Mammary epithelial cell (primary cell): ENCODE measurements at regions of chr18 and their contacts with region 1.

Region 1: GRCh38 chr18:63016270-63016669 is 300.9 kb downstream of the PHLPP1 start:
- DNase-seq: peak; percentile 19
- H3K4me3 ChIP-seq: no peak overlapping the region
- H3K27ac ChIP-seq: no peak overlapping the region
- H3K4me1 ChIP-seq: no peaks in the 10 kb centered on the region
- H3K27me3 ChIP-seq: peaks cover 2% of the 10 kb centered on the region
- CTCF ChIP-seq: peak; percentile 78 to 80

Region 2: DNA sequence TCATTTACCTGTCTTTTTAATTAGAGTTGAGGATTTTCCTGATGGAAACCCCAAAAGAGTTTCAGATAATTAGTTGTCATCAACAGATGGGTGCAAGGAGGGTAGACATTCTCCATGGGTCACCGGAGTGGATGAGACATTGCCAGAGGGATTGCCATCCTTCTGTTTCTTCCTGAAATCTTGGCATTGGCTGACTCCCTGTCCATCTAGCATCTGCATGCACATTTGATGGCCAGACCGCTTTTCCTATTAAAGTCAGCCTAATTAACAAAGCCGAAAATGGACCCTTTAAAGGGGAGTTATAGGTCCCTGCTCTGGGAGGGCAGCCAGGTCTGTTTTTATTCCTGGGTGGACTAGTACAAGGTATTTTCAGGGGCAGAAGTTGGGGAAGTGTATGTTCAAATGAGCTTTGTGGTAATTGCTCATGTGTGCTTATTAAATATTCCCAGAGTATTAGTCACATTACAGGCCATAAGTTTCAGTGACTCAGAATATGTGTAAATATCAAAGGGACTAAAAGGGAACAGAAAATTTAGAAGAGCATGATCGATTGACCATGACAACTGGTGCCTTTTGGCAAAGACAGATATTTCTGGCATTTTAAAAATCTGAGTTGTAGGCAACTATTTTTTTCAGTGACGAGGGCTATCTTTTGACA is 91.1 kb before region 1 on chr18:
- CTCF ChIA-PET with region 1: no interaction called
- dilution Hi-C with region 1: no loop called
- in situ Hi-C with region 1: no loop called
- intact Hi-C with region 1: no loop called
- DNase-seq: peak; percentile 53
- H3K4me3 ChIP-seq: no peak overlapping the region
- H3K27ac ChIP-seq: no peak overlapping the region
- H3K4me1 ChIP-seq: peaks cover 6% of the 10 kb centered on the region
- H3K27me3 ChIP-seq: no peaks in the 10 kb centered on the region
- CTCF ChIP-seq: no peak

Region 3: GRCh38 chr18:63119647-63120046 is 103.4 kb after region 1 on chr18:
- CTCF ChIA-PET with region 1: no interaction called
- dilution Hi-C with region 1: no loop called
- in situ Hi-C with region 1: no loop called
- intact Hi-C with region 1: loop called (anchors 1 kb)
- DNase-seq: no peak
- H3K4me3 ChIP-seq: no peak overlapping the region
- H3K27ac ChIP-seq: no peak overlapping the region
- H3K4me1 ChIP-seq: no peaks in the 10 kb centered on the region
- H3K27me3 ChIP-seq: no peaks in the 10 kb centered on the region
- CTCF ChIP-seq: peak; percentile 22 to 51

Region 4: GRCh38 chr18:63131106-63131958 is 115.1 kb after region 1 on chr18:
- CTCF ChIA-PET with region 1: no interaction called
- dilution Hi-C with region 1: no loop called
- in situ Hi-C with region 1: no loop called
- intact Hi-C with region 1: loop called (anchors 2 kb)
- DNase-seq: peak; percentile 32
- H3K4me3 ChIP-seq: no peak overlapping the region
- H3K27ac ChIP-seq: no peak overlapping the region
- H3K4me1 ChIP-seq: no peaks in the 10 kb centered on the region
- H3K27me3 ChIP-seq: no peaks in the 10 kb centered on the region
- CTCF ChIP-seq: peak; percentile 40 to 69

Region 5: GRCh38 chr18:63505566-63506335 is 489.5 kb after region 1 on chr18:
- CTCF ChIA-PET with region 1: no interaction called
- dilution Hi-C with region 1: no loop called
- in situ Hi-C with region 1: no loop called
- intact Hi-C with region 1: loop called (anchors 1 kb)
- DNase-seq: peak; percentile 72
- H3K4me3 ChIP-seq: no peak overlapping the region
- H3K27ac ChIP-seq: no peak overlapping the region
- H3K4me1 ChIP-seq: no peaks in the 10 kb centered on the region
- H3K27me3 ChIP-seq: no peaks in the 10 kb centered on the region
- CTCF ChIP-seq: peak; percentile 60 to 79